Natural killer cell (primary cell): ENCODE measurements at regions of chr17 and their contacts with region 1.

Region 1: GRCh38 chr17:28892024-28892423 is 5.5 kb downstream of the FLOT2 start:
- DNase-seq: no peak
- ATAC-seq: no peak
- H3K4me3 ChIP-seq: no peak overlapping the region
- H3K4me3 Mint-ChIP-seq: no peak overlapping the region
- H3K27ac ChIP-seq: peak overlapping the region; percentile 27
- H3K27ac Mint-ChIP-seq: peak overlapping the region; percentile 68 to 84
- H3K4me1 ChIP-seq: peaks cover 58% of the 10 kb centered on the region
- H3K4me1 Mint-ChIP-seq: peaks cover 53 to 58% of the 10 kb centered on the region in 2 donors
- H3K27me3 ChIP-seq: no peaks in the 10 kb centered on the region
- H3K27me3 Mint-ChIP-seq: no peaks in the 10 kb centered on the region
- CTCF ChIP-seq: no peak

Region 2: DNA sequence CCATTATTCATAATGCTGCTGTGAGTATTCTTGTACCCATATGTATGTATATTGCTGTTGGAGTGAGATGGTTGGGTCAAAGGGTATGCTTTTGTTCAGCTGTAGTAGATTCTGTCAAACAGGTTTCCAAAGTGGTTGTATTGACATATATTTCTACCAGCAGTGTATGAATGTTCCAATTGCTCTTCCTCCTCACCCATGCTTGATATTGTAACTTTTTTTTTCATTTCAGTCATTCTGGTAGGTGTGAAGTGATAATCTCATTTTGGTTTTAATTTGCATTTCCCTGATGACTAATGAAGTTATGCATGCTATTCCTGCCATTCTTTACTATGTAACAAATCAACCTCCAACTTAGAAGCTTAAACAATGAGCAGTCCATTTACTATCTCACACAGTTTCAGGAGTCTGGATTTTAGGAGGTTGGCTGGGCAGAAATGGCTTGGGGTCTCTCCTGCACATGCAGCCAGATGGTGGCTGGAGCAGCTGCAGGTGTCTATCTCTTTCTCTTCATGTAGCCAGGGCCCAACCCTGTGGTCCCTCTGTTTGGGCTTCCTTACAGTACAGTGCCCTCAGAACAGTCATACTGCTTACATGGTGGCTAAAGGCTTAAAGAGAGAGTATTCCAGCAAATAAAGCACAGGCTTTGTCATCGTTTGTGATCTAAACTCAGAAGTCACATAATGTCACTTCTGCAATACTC is 16.0 kb before region 1 on chr17:
- intact Hi-C with region 1: loop called (anchors 2 kb)
- DNase-seq: no peak
- ATAC-seq: no peak
- H3K4me3 ChIP-seq: no peak overlapping the region
- H3K4me3 Mint-ChIP-seq: no peak overlapping the region
- H3K27ac ChIP-seq: no peak overlapping the region
- H3K27ac Mint-ChIP-seq: no peak overlapping the region
- H3K4me1 ChIP-seq: peaks cover 10% of the 10 kb centered on the region
- H3K4me1 Mint-ChIP-seq: peaks cover 7 to 18% of the 10 kb centered on the region in 2 donors
- H3K27me3 ChIP-seq: no peaks in the 10 kb centered on the region
- H3K27me3 Mint-ChIP-seq: no peaks in the 10 kb centered on the region
- CTCF ChIP-seq: no peak

Region 3: GRCh38 chr17:28902819-28903545 is 11.0 kb after region 1 on chr17 and contains the start of gene DHRS13:
- intact Hi-C with region 1: no loop called
- DNase-seq: peak; percentile 92 to 98
- ATAC-seq: peak; percentile 92 to 99 (median 95)
- H3K4me3 ChIP-seq: peak within 1 kb of the TSS; percentile 69
- H3K4me3 Mint-ChIP-seq: peak within 1 kb of the TSS; percentile 83
- H3K27ac ChIP-seq: peak within 1 kb of the TSS; percentile 48
- H3K27ac Mint-ChIP-seq: peak within 1 kb of the TSS; percentile 69 to 84
- H3K4me1 ChIP-seq: peaks cover 30% of the 10 kb centered on the region
- H3K4me1 Mint-ChIP-seq: peaks cover 19 to 47% of the 10 kb centered on the region in 2 donors
- H3K27me3 ChIP-seq: no peaks in the 10 kb centered on the region
- H3K27me3 Mint-ChIP-seq: no peaks in the 10 kb centered on the region
- CTCF ChIP-seq: peak; percentile 99
- total RNA-seq, gene DHRS13: 22.5 to 27.3 (median 23.2) TPM